Activated naive CD4-positive, alpha-beta T cell treated with anti-CD3 and anti-CD28 coated beads for 36 hours (primary cell): ENCODE measurements at regions of chr18 and their contacts with region 1.

Region 1: DNA sequence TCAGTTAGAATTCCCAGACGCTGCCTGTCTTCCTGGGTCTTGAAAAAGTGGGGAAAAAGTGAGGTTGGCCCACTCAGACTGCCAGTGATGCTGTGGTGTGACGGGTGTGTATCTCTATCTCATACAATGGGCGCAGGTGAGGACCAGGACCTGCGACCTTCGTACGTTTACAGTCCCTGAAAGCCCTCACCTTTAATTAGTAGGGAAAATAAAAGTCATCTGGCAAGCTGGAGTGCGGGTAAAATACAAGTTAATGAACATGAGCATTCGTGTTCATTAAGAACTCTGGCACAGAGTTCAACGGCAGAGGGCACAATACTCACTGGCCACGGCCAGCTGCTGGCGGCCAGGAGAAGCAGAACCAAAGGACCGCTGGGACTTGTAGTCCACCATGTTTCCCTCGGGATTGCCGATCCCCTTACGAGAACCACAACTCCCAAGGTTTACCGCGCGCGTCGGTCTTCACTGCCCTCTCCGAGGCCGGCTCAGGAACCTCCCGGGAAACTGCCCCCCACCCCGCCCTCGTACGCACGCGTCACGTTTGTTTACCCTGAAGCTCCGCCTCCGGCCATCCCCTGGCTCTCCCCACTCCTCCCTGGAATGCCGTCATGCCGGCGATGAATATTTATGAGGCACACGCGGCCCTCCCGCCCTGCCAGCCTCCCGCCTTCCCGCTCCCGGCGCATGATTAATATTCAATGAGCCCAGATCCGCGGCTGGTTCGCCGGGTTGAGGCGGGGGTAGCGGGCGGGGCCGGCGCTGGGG is 488 bp upstream of the PHLPP1 start:
- DNase-seq: peak; percentile 98
- H3K4me3 Mint-ChIP-seq: peak overlapping the region; percentile 79
- H3K27ac Mint-ChIP-seq: peak overlapping the region; percentile 74
- H3K4me1 Mint-ChIP-seq: peaks cover 26% of the 10 kb centered on the region
- H3K27me3 Mint-ChIP-seq: peaks cover 6% of the 10 kb centered on the region

Region 2: GRCh38 chr18:61972389-61973264 is 742.2 kb before region 1 on chr18:
- CTCF ChIA-PET with region 1: no interaction called
- intact Hi-C with region 1: loop called (anchors 10 kb)
- DNase-seq: no peak
- H3K4me3 Mint-ChIP-seq: no peak overlapping the region
- H3K27ac Mint-ChIP-seq: no peak overlapping the region
- H3K4me1 Mint-ChIP-seq: peaks cover 16% of the 10 kb centered on the region
- H3K27me3 Mint-ChIP-seq: no peaks in the 10 kb centered on the region

Region 3: DNA sequence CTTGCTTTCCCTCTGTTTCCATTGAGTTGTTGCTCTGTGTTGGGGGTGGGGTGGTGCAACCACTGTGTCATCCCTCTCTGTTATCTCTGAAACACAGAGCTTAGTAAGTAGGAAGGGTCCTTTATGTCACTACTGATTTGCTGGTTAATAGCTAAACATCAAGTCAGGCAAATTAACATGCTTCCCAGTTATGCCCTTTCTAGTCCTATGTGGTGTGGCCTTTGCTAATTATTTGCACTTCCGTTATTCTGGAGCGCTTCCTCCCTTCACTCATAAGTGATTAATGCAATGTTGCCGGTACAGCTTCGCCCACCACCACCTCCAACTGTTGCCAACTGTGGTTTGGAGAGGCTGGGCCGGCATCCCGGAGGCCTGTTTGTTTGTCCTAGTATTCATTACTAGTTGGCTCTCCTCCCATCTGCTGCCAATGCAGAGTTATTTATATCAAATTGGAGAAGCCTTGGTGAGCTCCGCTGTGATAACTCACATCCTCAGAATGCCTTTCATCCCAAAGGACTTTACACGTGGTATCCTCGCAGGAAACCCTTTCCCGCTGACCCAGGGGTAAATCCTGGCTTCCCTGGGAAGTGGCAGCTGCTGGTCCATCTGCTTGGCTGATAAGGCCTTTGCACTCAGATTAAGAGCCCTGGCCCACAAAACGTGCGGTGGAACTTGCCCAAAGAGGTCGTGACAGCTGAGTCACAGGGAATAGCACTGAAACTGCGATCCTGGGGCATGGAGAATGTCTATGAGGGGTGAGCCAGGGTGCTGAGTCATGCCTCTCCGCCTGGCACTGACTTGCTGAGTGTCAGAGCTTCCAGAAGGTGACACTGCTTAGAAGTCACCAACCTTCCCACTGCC is 264.1 kb before region 1 on chr18:
- CTCF ChIA-PET with region 1: no interaction called
- intact Hi-C with region 1: no loop called
- DNase-seq: no peak
- H3K4me3 Mint-ChIP-seq: no peak overlapping the region
- H3K27ac Mint-ChIP-seq: no peak overlapping the region
- H3K4me1 Mint-ChIP-seq: peaks cover 8% of the 10 kb centered on the region
- H3K27me3 Mint-ChIP-seq: peaks cover 10% of the 10 kb centered on the region

Region 4: GRCh38 chr18:62505669-62506494 is 209.0 kb before region 1 on chr18:
- CTCF ChIA-PET with region 1: no interaction called
- intact Hi-C with region 1: loop called (anchors 1 kb)
- DNase-seq: peak; percentile 63
- H3K4me3 Mint-ChIP-seq: peak overlapping the region; percentile 55
- H3K27ac Mint-ChIP-seq: peak overlapping the region; percentile 86
- H3K4me1 Mint-ChIP-seq: peaks cover 20% of the 10 kb centered on the region
- H3K27me3 Mint-ChIP-seq: no peaks in the 10 kb centered on the region

Region 5: DNA sequence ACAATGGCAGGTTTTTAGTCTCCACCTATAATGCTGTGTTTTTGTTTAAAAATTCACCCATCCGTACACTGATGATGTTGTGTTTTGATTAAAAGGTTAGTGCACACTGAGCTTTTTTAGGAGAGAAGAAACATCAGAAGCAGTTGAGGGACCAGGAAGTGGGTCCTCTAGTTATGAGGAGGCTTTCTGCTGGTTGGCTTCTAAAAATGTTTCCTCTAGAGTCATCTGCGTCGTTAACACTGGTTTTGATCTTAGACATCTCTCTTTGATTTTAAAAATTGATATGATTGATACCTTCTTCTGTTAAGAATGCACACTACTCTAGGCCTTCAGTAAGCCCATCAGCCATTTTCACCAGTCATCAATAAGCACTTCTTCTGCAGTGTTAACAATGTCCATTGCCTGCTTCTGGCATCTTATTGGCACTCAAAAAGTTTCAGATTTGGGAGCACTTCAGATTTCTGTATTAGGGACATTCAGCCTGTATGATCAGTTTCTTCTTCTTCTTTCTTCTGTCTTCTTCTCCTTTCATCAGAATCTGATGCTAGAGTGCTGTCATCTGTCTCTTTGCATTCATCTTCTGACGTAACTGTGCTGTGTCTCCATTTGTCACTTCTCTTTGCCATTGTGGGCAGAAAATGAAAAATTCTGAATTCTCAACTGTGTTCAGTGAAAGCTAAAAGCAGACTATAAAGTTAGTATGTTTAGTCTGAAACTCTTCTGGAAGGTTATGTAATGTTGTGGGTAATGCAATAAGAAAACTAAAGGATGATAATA is 56.8 kb after region 1 on chr18:
- CTCF ChIA-PET with region 1: no interaction called
- intact Hi-C with region 1: loop called (anchors 2 kb)
- DNase-seq: peak; percentile 19
- H3K4me3 Mint-ChIP-seq: no peak overlapping the region
- H3K27ac Mint-ChIP-seq: no peak overlapping the region
- H3K4me1 Mint-ChIP-seq: peaks cover 17% of the 10 kb centered on the region
- H3K27me3 Mint-ChIP-seq: no peaks in the 10 kb centered on the region

Region 6: DNA sequence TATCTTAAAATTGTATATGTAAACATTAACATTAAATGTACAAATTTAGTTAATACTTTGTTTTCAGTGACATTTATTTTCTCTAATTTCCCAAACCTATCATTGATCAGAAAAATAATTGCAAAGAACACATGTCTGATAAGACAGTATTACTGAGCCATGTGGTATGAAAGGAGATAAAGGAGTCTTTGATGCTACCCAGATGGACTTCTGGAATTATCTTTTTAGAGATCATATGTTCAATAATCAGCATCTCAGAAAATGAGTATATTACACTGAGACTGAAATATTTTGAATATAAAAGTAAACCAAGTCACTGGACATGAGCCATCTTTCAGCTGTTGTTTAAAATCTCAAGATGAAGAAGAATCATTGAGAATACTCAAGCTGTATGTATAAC is 153.8 kb after region 1 on chr18:
- CTCF ChIA-PET with region 1: no interaction called
- intact Hi-C with region 1: loop called (anchors 1 kb)
- DNase-seq: no peak
- H3K4me3 Mint-ChIP-seq: no peak overlapping the region
- H3K27ac Mint-ChIP-seq: no peak overlapping the region
- H3K4me1 Mint-ChIP-seq: peaks cover 14% of the 10 kb centered on the region
- H3K27me3 Mint-ChIP-seq: no peaks in the 10 kb centered on the region

Region 7: GRCh38 chr18:62894681-62895390 is 180.0 kb after region 1 on chr18:
- CTCF ChIA-PET with region 1: no interaction called
- intact Hi-C with region 1: no loop called
- DNase-seq: no peak
- H3K4me3 Mint-ChIP-seq: no peak overlapping the region
- H3K27ac Mint-ChIP-seq: no peak overlapping the region
- H3K4me1 Mint-ChIP-seq: no peaks in the 10 kb centered on the region
- H3K27me3 Mint-ChIP-seq: no peaks in the 10 kb centered on the region

Region 8: GRCh38 chr18:63161761-63162195 is 446.9 kb after region 1 on chr18:
- CTCF ChIA-PET with region 1: no interaction called
- intact Hi-C with region 1: loop called (anchors 1 kb)
- DNase-seq: peak; percentile 94
- H3K4me3 Mint-ChIP-seq: peak overlapping the region; percentile 74
- H3K27ac Mint-ChIP-seq: peak overlapping the region; percentile 99
- H3K4me1 Mint-ChIP-seq: peaks cover 93% of the 10 kb centered on the region
- H3K27me3 Mint-ChIP-seq: no peaks in the 10 kb centered on the region

Region 9: DNA sequence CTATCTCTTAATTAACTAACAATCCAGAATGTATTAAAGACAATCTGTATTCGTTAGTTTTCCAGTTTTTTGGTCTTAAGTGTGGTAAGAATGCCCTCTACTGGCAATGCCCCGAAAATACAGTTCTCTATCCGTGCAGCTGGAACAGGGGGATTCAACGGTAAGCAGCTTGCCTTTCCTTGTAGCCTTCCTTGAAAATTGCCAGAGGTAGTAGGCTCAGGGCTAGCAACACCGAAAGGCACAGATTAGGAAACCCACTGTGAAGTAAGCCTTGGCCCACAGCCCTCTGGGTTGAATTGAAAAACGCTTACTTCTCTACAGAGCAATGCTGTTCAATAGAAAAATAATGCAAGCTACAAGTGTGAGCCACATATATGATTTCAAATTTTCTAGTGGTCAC is 724.5 kb after region 1 on chr18:
- CTCF ChIA-PET with region 1: no interaction called
- intact Hi-C with region 1: loop called (anchors 2 kb)
- DNase-seq: peak; percentile 60
- H3K4me3 Mint-ChIP-seq: no peak overlapping the region
- H3K27ac Mint-ChIP-seq: no peak overlapping the region
- H3K4me1 Mint-ChIP-seq: peaks cover 2% of the 10 kb centered on the region
- H3K27me3 Mint-ChIP-seq: no peaks in the 10 kb centered on the region